GM12878 (cell line): ENCODE measurements at regions of chr2 and their contacts with region 1.

Region 1: DNA sequence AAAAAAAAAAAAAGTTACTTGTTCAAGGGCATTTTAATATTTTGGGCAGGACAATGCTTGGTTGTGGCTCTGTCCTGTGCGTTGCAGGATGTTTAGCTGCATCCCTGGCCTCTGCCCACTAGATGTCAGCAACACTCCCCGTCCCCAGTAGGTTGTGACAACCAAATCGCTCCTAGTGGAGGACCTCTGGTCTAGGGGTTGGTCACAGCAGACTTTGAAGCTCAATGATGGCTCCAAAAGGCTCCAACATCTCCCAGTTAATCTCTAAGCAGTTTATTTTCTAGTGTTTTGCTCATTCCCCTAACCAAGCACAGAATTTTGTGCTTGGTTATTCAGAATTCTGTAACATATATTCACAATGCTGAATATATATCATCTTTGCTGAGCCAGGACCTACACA is 67.0 kb downstream of the CHRNA1 start:
- DNase-seq: no peak
- ATAC-seq: peak; percentile 98
- H3K4me3 ChIP-seq: no peak overlapping the region
- H3K27ac ChIP-seq: no peak overlapping the region
- H3K4me1 ChIP-seq: no peaks in the 10 kb centered on the region
- H3K27me3 ChIP-seq: no peaks in the 10 kb centered on the region; a peak in 2 of 4 replicates
- CTCF ChIP-seq: peak; percentile 89 to 91 (median 89)
- EP300 ChIP-seq: no peak
- POLR2A ChIP-seq: no peak
- RAD21 ChIP-seq: peak; percentile 66

Region 2: GRCh38 chr2:174344716-174345461 is 352.4 kb before region 1 on chr2:
- CTCF ChIA-PET with region 1: no interaction called
- POLR2A ChIA-PET with region 1: no interaction called
- RAD21 ChIA-PET with region 1: no interaction called
- SMC1A ChIA-PET with region 1: no interaction called
- in situ Hi-C with region 1: no loop called
- intact Hi-C with region 1: no loop called
- DNase-seq: no peak
- ATAC-seq: peak; percentile 18; the same call in 1 of the 3 replicates
- H3K4me3 ChIP-seq: no peak overlapping the region
- H3K27ac ChIP-seq: no peak overlapping the region
- H3K4me1 ChIP-seq: peaks cover 10% of the 10 kb centered on the region
- H3K27me3 ChIP-seq: peaks cover 7 to 22% of the 10 kb centered on the region in 2 experiments; a peak in 3 of 4 replicates
- CTCF ChIP-seq: peak in 2 of 3 experiments; percentile 36 to 37; a peak in 3 of 6 replicates
- EP300 ChIP-seq: no peak
- POLR2A ChIP-seq: no peak
- RAD21 ChIP-seq: peak; percentile 50

Region 3: GRCh38 chr2:174577967-174578589 is 119.2 kb before region 1 on chr2:
- CTCF ChIA-PET with region 1: interaction called, 19 read pairs
- POLR2A ChIA-PET with region 1: no interaction called
- RAD21 ChIA-PET with region 1: interaction called, 4 read pairs
- SMC1A ChIA-PET with region 1: interaction called, 3 read pairs
- in situ Hi-C with region 1: loop called (anchors 25 kb)
- intact Hi-C with region 1: no loop called
- DNase-seq: no peak
- ATAC-seq: peak; percentile 71
- H3K4me3 ChIP-seq: no peak overlapping the region
- H3K27ac ChIP-seq: no peak overlapping the region
- H3K4me1 ChIP-seq: peaks cover 7% of the 10 kb centered on the region
- H3K27me3 ChIP-seq: no peaks in the 10 kb centered on the region
- CTCF ChIP-seq: peak; percentile 60 to 77 (median 64); a peak in 5 of 6 replicates
- EP300 ChIP-seq: no peak
- POLR2A ChIP-seq: no peak
- RAD21 ChIP-seq: peak; percentile 88

Region 4: GRCh38 chr2:174634130-174635014 is 62.9 kb before region 1 on chr2:
- CTCF ChIA-PET with region 1: interaction called, 4 read pairs
- POLR2A ChIA-PET with region 1: interaction called, 3 read pairs
- RAD21 ChIA-PET with region 1: interaction called, 3 read pairs
- SMC1A ChIA-PET with region 1: interaction called, 15 read pairs
- in situ Hi-C with region 1: no loop called
- intact Hi-C with region 1: no loop called
- DNase-seq: peak; percentile 65
- ATAC-seq: peak; percentile 85
- H3K4me3 ChIP-seq: peak overlapping the region; percentile 84
- H3K27ac ChIP-seq: peak overlapping the region; percentile 91
- H3K4me1 ChIP-seq: peaks cover 22% of the 10 kb centered on the region
- H3K27me3 ChIP-seq: no peaks in the 10 kb centered on the region
- CTCF ChIP-seq: peak; percentile 35 to 47 (median 45); a peak in 5 of 6 replicates
- EP300 ChIP-seq: no peak
- POLR2A ChIP-seq: peak; percentile 60
- RAD21 ChIP-seq: no peak

Region 5: DNA sequence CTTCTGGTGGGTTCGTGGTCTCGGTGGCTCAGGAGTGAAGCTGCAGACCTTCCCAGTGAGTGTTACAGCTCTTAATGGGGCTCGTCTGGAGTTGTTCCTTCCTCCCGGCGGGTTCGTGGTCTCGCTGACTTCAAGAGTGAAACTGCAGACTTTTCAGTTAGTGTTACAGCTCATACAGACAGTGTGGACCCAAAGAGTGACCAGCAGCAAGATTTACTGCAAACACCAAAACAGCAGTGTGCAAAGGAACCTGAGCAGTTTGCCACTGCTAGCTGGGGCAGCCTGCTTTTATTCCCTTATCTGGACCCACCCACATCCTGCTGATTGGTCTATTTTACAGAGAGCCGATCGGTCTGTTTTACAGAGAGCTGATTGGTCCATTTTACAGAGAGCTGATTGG is 11.5 kb after region 1 on chr2:
- CTCF ChIA-PET with region 1: interaction called, 14 read pairs
- POLR2A ChIA-PET with region 1: no interaction called
- RAD21 ChIA-PET with region 1: interaction called, 3 read pairs
- SMC1A ChIA-PET with region 1: interaction called, 6 read pairs
- in situ Hi-C with region 1: no loop called
- intact Hi-C with region 1: no loop called
- DNase-seq: no peak
- ATAC-seq: no peak
- H3K4me3 ChIP-seq: no peak overlapping the region
- H3K27ac ChIP-seq: no peak overlapping the region
- H3K4me1 ChIP-seq: no peaks in the 10 kb centered on the region
- H3K27me3 ChIP-seq: no peaks in the 10 kb centered on the region; a peak in 1 of 4 replicates
- CTCF ChIP-seq: no peak
- EP300 ChIP-seq: no peak
- POLR2A ChIP-seq: no peak
- RAD21 ChIP-seq: no peak

Region 6: GRCh38 chr2:174771631-174772471 is 74.6 kb after region 1 on chr2:
- CTCF ChIA-PET with region 1: interaction called, 12 read pairs
- POLR2A ChIA-PET with region 1: no interaction called
- RAD21 ChIA-PET with region 1: interaction called, 4 read pairs
- SMC1A ChIA-PET with region 1: interaction called, 3 read pairs
- in situ Hi-C with region 1: no loop called
- intact Hi-C with region 1: no loop called
- DNase-seq: no peak
- ATAC-seq: peak; percentile 97
- H3K4me3 ChIP-seq: no peak overlapping the region
- H3K27ac ChIP-seq: no peak overlapping the region
- H3K4me1 ChIP-seq: no peaks in the 10 kb centered on the region
- H3K27me3 ChIP-seq: peaks cover 0 to 1% of the 10 kb centered on the region in 2 experiments; a peak in 1 of 4 replicates
- CTCF ChIP-seq: peak; percentile 50 to 72 (median 70)
- EP300 ChIP-seq: no peak
- POLR2A ChIP-seq: no peak
- RAD21 ChIP-seq: peak; percentile 67